Right cardiac atrium (tissue), 5 donors: ENCODE measurements at regions of chr1 and their contacts with region 1.

Region 1: DNA sequence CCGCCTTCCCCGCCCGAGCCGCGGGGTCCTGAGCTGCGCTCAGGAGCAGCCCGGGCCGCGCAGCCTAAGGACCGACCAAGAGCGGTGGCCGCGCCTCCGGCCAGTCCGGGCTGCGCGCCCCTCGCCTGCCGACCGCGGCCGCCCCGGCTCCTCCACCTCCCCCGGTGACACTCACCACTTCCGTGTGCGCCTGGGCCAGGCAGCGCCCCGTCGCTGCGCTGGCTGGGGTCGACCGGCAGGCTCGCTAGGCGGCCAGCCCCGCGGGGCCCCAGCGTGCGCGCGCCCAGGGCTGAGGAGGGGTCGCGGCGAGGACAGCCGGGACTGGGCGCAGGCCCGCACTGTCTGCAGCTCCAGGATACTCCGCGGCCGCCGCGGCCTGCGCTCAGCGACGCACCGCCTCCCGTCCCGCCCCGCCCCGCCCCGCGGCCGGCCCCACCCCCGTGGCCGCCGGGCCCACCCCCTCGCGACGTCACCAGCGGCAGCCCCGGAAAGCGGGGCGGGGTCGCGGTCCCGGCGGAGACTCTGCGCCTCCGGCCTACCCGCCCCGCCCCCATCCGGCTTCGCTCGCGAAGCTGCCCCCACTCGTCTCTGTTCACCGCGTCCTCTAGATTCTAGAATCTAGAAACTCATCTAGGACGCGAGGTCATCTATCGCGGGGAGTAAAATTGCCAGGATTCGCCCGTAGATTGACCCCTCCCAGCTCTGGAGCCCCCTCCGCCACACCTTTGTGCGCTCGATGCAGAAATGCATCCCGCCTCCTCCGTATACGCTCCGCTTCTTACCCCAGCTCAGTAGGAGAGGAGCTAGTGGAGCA is at the start of gene JAK1:
- DNase-seq: peak; percentile 91 to 97 (median 96)
- ATAC-seq: peak; percentile 94 to 95
- H3K4me3 ChIP-seq: peak within 1 kb of the TSS; percentile 99
- H3K27ac ChIP-seq: peak within 1 kb of the TSS; percentile 98
- H3K4me1 ChIP-seq: peaks cover 6% of the 10 kb centered on the region
- H3K27me3 ChIP-seq: no peaks in the 10 kb centered on the region
- total RNA-seq, gene JAK1: 76.6 to 106 (median 88.0) TPM

Region 2: GRCh38 chr1:64744492-64745180 is 221.7 kb before region 1 on chr1 and contains the start of gene RAVER2:
- intact Hi-C with region 1: loop called in 1 of 4 experiments (anchors 10 kb)
- DNase-seq: peak; percentile 79 to 91 (median 91)
- ATAC-seq: peak; percentile 92 to 93
- H3K4me3 ChIP-seq: peak within 1 kb of the TSS; percentile 90
- H3K27ac ChIP-seq: peak within 1 kb of the TSS; percentile 66
- H3K4me1 ChIP-seq: no peaks in the 10 kb centered on the region
- H3K27me3 ChIP-seq: no peaks in the 10 kb centered on the region
- total RNA-seq, gene RAVER2: 17.6 to 28.5 (median 25.4) TPM

Region 3: DNA sequence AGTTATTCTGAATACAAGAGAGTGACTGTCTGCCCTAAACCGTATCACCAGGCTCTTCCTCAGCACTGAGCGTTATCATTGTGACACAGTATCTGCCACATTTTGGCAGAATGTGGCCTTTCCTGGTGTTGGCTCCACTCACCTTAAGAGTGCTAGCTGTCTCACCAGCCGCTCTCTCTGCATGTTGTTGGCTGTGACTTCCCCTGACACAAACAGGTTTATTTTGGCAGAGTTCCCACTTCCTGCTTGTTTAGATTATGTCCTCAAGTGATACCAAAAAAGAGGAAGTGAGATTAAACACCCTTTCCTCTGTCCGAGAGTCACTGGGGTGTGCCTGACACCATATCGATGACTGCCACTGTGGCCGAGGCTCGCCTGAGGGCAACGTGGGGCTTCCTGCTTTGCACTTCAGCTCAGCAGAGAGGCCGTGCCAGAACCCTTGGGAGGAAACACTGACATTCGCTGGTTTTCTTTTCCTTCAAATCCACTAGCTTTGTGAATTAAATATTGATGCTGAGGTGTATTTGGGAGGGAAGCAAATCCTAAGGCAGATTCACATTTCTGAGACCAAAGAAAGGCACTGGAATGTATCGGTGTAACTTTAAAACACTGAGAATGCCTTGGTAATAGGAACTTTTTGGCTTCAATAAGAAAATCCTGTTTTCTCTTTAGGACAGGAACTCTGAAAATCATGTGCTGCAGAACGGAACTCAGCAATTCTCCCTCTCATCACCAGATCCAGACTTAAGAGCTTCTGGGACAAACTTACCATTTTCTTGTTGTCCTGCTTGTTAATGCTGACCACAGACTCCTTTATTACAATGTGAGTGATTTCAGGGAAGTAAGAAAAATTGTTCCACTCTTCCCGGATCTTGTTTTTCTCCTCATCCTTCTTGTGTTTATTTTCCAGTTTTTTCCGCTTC is 102.1 kb before region 1 on chr1:
- intact Hi-C with region 1: loop called in 1 of 4 experiments (anchors 10 kb)
- DNase-seq: peak; percentile 75 to 89 (median 84)
- ATAC-seq: peak; percentile 90 to 97
- H3K4me3 ChIP-seq: no peak overlapping the region
- H3K27ac ChIP-seq: no peak overlapping the region
- H3K4me1 ChIP-seq: no peaks in the 10 kb centered on the region
- H3K27me3 ChIP-seq: no peaks in the 10 kb centered on the region

Region 4: DNA sequence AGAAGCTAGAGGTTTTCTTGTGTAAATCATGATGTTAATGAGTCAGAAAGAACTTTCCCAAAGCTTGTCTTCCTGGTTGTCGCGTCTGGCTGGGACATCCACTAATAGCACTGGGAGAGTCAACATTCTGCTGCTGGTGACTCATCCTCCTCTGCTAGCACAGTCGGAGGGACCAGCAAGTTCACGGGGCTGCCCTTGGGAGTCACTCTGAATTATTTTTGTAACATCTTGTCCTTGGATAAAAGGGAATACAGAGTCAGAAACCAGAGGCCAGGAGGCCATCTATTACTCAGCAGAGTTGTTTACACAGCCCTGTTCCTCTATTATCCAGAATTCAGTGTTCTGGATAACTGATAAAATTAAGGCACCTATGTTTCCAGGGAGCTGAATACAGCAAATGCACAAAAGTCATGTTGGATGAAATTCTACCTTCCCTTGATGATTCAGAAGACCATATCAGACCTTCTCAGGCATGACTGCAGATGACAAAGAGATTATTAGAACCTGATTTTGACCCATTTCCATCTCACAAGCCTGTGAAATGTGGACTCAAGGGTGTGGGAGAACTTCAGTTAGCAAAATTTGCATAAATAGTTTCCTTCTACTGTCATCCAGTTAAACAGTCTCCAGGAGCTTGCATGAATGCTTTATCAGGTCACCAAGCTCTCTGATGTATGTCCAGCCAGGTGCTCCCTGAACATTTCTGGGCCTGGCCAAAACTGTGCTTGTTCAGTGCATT is 68.1 kb before region 1 on chr1:
- intact Hi-C with region 1: loop called in 1 of 4 experiments (anchors 10 kb)
- DNase-seq: peak; percentile 81 to 89 (median 89)
- ATAC-seq: peak; percentile 98 to 99
- H3K4me3 ChIP-seq: no peak overlapping the region
- H3K27ac ChIP-seq: peak overlapping the region; percentile 87
- H3K4me1 ChIP-seq: peaks cover 18% of the 10 kb centered on the region
- H3K27me3 ChIP-seq: no peaks in the 10 kb centered on the region